ENCODE measurements at regions of chr18 and their contacts with region 1.

Region 1: GRCh38 chr18:14086458-14087231 is 45.6 kb downstream of the ZNF519 start:
- DNase-seq: peak; percentile 39

Region 2: DNA sequence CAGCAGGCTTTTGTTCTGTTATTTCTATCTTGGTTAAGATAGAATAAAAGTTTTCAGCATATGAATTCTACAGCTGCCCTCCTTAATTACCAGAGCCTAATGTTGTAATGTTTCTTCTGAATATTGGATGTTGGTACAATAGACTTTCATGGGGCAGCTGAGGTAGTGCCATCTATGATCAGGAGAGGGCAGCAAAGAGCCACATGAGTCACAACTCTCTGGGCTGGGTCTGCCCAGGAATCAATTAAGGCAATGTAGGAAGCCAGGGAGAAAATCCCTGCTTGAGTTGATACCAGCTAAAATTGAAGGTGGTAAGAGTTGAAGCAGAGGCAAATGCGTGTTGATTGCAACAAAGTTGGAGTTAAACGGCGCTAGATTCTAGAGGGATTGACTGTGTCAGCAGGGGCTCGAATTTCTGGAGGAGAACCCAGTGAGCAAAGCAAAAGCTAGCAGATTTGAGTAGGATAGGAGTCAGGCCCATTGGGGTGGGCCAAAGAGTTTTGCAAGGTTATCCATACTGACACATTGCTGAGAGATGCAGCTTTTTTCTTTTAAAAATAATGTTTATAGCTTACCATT is 273.3 kb before region 1 on chr18:
- CTCF ChIA-PET with region 1: interaction called, 18 read pairs
- POLR2A ChIA-PET with region 1: no interaction called
- DNase-seq: peak; percentile 61

Region 3: DNA sequence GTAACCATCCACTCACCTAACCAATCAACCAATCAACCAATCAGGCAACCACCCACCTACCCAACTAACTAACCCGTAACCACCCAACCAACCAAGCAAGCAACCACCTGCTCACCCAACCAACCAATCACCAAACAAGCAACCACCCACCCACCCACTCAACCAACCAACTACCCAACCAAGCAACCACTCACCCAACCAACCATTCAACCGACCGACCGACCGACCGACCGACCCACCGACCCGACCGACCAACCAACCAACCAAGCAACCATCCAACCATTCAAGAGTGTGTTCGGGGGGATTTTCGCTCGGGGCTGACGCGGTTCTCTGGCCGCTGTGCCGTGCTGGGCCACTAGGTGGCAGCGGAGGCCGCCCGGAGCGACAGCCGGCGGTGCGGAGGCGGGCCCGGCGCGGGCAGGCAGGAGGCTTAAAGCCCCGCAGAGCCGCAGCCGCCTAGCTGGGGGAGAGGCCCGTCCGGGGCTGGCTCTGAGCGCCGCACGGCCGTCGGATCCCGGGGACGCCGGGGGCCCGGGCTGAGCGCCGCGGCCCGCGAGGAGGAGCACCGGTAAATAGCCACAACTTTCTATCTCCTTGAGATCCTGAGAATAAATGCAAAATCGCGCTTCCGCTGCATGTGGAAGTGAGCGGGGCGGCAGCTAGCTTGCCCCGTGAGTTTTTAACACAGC is 262.8 kb before region 1 on chr18 and contains the start of gene MC5R:
- CTCF ChIA-PET with region 1: interaction called, 16 read pairs
- POLR2A ChIA-PET with region 1: no interaction called
- DNase-seq: peak; percentile 72

Region 4: GRCh38 chr18:14100503-14101286 is 14.1 kb after region 1 on chr18:
- CTCF ChIA-PET with region 1: no interaction called
- POLR2A ChIA-PET with region 1: no interaction called
- DNase-seq: no peak